Activated naive CD8-positive, alpha-beta T cell treated with anti-CD3 and anti-CD28 coated beads, Interleukin-2, amount 10 ng/mL, durations not matched to agents 7 days and 5 days (primary cell): ENCODE measurements at regions of chr18 and their contacts with region 1.

Region 1: GRCh38 chr18:5295981-5296705 is 617 bp upstream of the ZBTB14 start:
- DNase-seq: peak; percentile 94
- ATAC-seq: peak; percentile 74
- H3K4me3 Mint-ChIP-seq: peak overlapping the region; percentile 93
- H3K27ac Mint-ChIP-seq: peak overlapping the region; percentile 96
- H3K4me1 Mint-ChIP-seq: peaks cover 15% of the 10 kb centered on the region
- H3K27me3 Mint-ChIP-seq: peaks cover 6% of the 10 kb centered on the region

Region 2: GRCh38 chr18:5237723-5238370 is 58.3 kb before region 1 on chr18:
- POLR2A ChIA-PET with region 1: interaction called, 169 read pairs
- DNase-seq: peak; percentile 95
- ATAC-seq: peak; percentile 94
- H3K4me3 Mint-ChIP-seq: peak overlapping the region; percentile 93
- H3K27ac Mint-ChIP-seq: peak overlapping the region; percentile 96
- H3K4me1 Mint-ChIP-seq: peaks cover 19% of the 10 kb centered on the region
- H3K27me3 Mint-ChIP-seq: no peaks in the 10 kb centered on the region

Region 3: DNA sequence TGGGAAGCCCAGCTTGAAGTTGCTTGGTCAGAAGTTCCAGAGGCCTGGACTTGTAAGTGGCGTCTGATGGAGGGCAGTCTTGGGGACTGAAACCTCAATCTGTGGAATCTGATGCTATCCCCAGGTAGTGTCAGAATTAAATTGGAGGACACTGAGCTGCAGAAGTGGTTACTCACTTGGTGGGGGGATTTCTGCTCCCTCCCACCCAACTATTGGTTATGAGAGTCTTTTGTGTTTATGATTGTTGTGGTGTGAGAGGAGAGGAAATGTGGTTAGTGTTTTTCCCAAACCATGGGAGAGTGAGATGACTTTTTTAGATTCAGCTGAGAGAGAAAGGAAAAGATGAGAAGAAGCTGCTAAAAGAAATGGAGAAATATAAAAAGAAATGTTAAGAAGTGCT is 13.4 kb before region 1 on chr18:
- POLR2A ChIA-PET with region 1: interaction called, 11 read pairs
- DNase-seq: no peak
- ATAC-seq: no peak
- H3K4me3 Mint-ChIP-seq: no peak overlapping the region
- H3K27ac Mint-ChIP-seq: no peak overlapping the region
- H3K4me1 Mint-ChIP-seq: peaks cover 8% of the 10 kb centered on the region
- H3K27me3 Mint-ChIP-seq: peaks cover under 1% of the 10 kb centered on the region

Region 4: GRCh38 chr18:5309888-5310470 is 13.8 kb after region 1 on chr18:
- POLR2A ChIA-PET with region 1: interaction called, 75 read pairs
- DNase-seq: no peak
- ATAC-seq: peak; percentile 99
- H3K4me3 Mint-ChIP-seq: peak overlapping the region; percentile 87
- H3K27ac Mint-ChIP-seq: peak overlapping the region; percentile 86
- H3K4me1 Mint-ChIP-seq: peaks cover 24% of the 10 kb centered on the region
- H3K27me3 Mint-ChIP-seq: peaks cover 2% of the 10 kb centered on the region

Region 5: DNA sequence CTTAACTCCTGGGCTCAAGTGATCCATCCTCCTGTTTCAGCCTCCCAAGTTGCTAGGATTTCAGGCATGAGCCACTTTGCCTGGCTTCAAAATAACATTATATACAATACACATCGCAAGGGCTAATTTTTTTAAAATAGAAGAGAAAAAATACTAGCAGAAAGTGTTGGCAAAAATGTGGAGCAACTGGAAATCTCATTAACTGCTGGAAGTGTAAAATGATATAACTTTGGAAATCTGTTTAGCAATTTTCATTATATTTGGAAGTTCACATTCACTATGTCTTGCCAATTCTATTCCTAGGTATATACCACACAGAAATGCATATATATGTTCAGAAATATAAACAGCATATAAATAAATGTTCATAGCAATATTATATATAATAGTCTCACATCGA is 54.5 kb after region 1 on chr18:
- POLR2A ChIA-PET with region 1: no interaction called
- DNase-seq: no peak
- ATAC-seq: no peak
- H3K4me3 Mint-ChIP-seq: no peak overlapping the region
- H3K27ac Mint-ChIP-seq: no peak overlapping the region
- H3K4me1 Mint-ChIP-seq: no peaks in the 10 kb centered on the region
- H3K27me3 Mint-ChIP-seq: no peaks in the 10 kb centered on the region

Region 6: GRCh38 chr18:5527603-5528002 is 231.5 kb after region 1 on chr18:
- POLR2A ChIA-PET with region 1: no interaction called
- DNase-seq: no peak
- ATAC-seq: no peak
- H3K4me3 Mint-ChIP-seq: no peak overlapping the region
- H3K27ac Mint-ChIP-seq: no peak overlapping the region
- H3K4me1 Mint-ChIP-seq: no peaks in the 10 kb centered on the region
- H3K27me3 Mint-ChIP-seq: no peaks in the 10 kb centered on the region